Activated naive CD4-positive, alpha-beta T cell treated with anti-CD3 and anti-CD28 coated beads, Interleukin-2, amount 10 ng/mL, durations not matched to agents 7 days and 5 days (primary cell): ENCODE measurements at regions of chr11 and their contacts with region 1.

Region 1: DNA sequence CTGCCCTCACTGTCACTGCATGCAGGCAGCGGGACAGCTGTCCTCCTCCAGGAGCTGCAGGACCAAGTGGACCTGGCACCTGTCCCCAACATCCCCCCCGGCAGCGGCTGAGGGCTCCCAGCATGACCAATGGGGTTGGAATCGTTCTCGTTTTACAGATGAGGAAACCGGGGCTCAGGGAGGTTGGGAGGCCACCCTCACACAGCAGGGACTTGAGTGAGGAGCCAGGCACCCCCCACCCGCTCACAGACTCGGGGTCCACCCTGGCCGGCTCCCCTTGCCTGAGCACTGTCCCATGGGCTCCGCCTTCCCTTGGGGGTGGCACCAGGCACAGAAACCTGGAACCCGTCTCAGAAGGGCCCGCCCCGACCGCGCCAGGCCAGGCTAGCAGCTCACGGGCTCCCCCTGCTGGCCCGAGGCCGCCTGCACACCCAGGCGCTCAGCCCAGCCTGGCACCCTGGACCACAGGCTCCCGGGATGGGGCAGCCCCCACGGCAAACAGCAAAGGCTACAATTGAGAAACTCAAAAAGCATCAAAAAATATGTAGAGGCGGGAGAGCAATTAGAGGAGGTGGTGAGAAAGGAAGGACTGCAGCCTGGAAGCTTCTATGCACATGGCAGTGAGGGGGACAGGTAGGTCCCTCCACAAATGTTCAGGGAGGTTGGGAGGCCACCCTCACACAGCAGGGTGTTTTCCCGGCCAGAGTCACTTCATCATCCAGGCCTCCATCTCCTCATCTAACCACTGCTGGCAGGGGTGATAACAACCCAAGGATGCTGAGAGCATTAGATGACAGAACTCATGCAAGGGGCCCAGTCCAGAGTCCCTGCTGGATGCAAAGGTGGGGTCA is 12.8 kb downstream of the MACROD1 start:
- DNase-seq: peak; percentile 76
- H3K4me3 Mint-ChIP-seq: no peak overlapping the region
- H3K27ac Mint-ChIP-seq: no peak overlapping the region
- H3K4me1 Mint-ChIP-seq: peaks cover 6% of the 10 kb centered on the region
- H3K27me3 Mint-ChIP-seq: peaks cover 11% of the 10 kb centered on the region

Region 2: DNA sequence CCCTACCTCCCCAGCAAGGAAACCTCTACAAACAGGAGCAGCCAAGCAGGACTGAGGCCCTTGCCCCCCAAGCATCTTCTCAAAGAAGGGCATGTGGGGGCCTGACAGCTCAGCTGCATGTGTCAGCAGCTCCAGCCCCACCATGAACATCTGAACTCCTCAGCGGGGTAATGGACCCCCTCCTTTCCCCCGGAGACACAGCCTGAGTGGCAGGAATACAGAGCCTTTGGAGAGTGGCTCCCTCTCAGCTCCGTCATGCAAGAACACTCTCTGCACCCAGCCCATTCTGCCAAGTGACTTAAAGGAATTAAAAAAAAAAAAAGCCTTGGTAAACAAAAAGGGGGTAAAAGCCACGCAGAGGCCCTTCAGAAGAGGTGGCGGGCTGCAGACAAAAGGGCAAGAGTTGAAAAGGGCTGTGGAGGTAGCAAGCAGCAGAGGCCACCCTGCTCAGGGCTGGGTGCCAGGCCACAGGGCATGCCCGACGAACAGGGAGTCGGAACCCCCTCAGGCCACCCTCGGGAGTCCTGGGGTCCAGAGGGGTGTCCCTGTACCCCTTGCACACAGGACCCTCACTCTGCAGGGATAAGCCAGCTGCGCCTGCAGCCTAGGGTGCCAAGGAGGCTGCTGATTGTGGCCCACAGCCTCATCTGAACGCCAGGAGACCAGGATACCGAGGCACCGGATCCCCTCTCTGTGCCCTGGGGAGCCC is 49.6 kb before region 1 on chr11:
- CTCF ChIA-PET with region 1: no interaction called
- DNase-seq: no peak
- H3K4me3 Mint-ChIP-seq: no peak overlapping the region
- H3K27ac Mint-ChIP-seq: no peak overlapping the region
- H3K4me1 Mint-ChIP-seq: no peaks in the 10 kb centered on the region
- H3K27me3 Mint-ChIP-seq: peaks cover 6% of the 10 kb centered on the region

Region 3: DNA sequence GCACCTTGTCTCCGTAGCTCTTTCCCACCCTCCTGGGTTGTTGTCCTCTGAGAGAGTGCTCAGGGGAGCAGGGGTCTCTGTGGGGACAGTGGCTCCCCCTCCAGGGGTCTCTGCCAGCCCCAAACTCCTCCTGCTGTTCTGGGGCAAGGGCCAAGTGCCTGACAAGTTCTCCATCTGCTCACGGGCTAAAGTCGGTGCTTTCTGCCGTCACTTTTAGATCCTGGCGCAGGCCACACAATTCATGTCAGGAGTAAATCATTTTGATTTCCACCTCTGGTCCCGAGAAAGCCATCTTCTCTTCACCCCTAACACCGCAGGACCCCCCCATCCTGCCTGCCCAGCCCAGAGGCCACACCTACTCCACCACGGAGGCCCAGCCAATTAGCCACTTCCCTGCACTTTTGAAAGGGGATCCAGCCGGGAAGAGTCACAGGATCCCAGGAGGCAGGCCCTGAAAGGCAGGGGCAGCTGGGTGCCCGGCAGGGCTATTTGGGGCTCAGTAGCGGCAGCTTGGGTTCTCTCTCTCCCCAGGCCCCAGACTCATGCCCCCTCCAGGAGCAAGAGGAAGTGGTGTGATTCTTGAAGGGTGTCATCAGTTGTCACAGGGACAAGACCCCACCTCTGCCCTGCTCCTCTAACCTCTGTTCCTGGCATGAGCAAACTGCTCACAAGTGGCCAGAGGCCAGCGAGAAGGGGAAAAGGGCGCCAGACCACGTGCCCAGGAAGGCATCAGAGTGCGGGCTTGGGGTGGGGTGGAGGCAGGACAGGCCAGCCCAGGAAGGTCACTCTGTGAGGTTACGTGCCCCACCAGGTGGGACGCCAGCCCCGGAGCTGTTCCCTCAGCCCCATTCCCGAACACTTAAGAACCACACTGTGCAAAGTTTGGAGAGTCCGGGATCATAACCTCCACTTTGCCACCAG is 11.6 kb after region 1 on chr11:
- CTCF ChIA-PET with region 1: interaction called, 16 read pairs
- DNase-seq: no peak
- H3K4me3 Mint-ChIP-seq: peak overlapping the region; percentile 89
- H3K27ac Mint-ChIP-seq: peak overlapping the region; percentile 69
- H3K4me1 Mint-ChIP-seq: peaks cover 13% of the 10 kb centered on the region
- H3K27me3 Mint-ChIP-seq: no peaks in the 10 kb centered on the region